ENCODE measurements at regions of chr11 and their contacts with region 1.

Region 1: GRCh38 chr11:124070915-124071635 is 29.9 kb upstream of the OR10G7 start:
- DNase-seq: peak; percentile 44 to 60 (median 51)
- H3K4me3 ChIP-seq: no peak overlapping the region
- H3K4me3 Mint-ChIP-seq: no peak overlapping the region
- H3K27ac ChIP-seq: no peak overlapping the region
- H3K27ac Mint-ChIP-seq: no peak overlapping the region
- H3K4me1 ChIP-seq: peaks cover 3% of the 10 kb centered on the region
- H3K4me1 Mint-ChIP-seq: peaks cover 0 to 5% (median 1%) of the 10 kb centered on the region in 4 donors
- H3K27me3 ChIP-seq: peaks cover 8% of the 10 kb centered on the region
- H3K27me3 Mint-ChIP-seq: peaks cover 16 to 32% of the 10 kb centered on the region in 2 donors

Region 2: DNA sequence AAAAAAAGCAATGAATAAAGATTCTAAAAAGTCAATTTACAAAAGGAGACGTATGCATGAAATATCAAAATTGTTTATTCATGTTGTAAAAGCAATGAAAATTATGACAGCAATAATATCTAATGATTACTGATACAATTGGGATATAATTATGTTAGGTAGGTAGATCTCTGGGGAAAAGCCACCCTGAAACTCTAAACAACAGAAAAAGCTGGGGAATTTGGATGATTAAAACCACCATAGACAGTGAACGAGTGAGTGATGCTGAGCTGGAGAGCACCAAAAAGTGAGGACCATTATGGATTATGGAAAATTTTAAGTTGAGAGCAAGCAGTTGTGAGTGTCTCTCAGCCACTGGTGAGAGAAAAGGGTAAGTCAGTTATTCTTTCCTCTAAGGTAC is 44.6 kb before region 1 on chr11 and contains the start of gene OR10G8:
- CTCF ChIA-PET with region 1: no interaction called
- POLR2A ChIA-PET with region 1: no interaction called
- intact Hi-C with region 1: no loop called
- DNase-seq: no peak
- H3K4me3 ChIP-seq: no peak within 1 kb of the TSS
- H3K4me3 Mint-ChIP-seq: no peak within 1 kb of the TSS
- H3K27ac ChIP-seq: no peak within 1 kb of the TSS
- H3K27ac Mint-ChIP-seq: no peak within 1 kb of the TSS
- H3K4me1 ChIP-seq: no peaks in the 10 kb centered on the region
- H3K4me1 Mint-ChIP-seq: no peaks in the 10 kb centered on the region
- H3K27me3 ChIP-seq: no peaks in the 10 kb centered on the region
- H3K27me3 Mint-ChIP-seq: peaks cover 0 to 2% of the 10 kb centered on the region in 2 donors
- total RNA-seq, gene OR10G8: not detected

Region 3: DNA sequence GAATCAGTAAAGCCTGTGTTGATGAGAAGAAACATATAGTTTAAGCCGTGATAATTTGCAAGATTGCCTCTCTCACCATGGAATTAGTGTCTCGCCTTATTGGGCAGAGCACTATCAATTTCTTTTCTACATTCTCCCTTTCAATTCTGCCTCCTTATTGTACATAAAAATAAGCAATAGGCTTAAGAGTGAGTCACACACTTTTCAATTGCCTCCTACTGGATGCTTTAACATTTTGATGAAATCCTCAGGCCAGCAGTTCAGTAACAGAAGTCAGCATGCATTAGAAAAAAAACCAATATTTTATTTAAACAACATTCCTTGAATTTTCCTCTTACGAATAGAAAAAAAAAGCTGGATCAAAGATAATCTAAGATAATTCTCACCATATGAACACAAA is 10.4 kb after region 1 on chr11:
- CTCF ChIA-PET with region 1: interaction called, 10 read pairs
- POLR2A ChIA-PET with region 1: no interaction called
- intact Hi-C with region 1: no loop called
- DNase-seq: no peak
- H3K4me3 ChIP-seq: no peak overlapping the region
- H3K4me3 Mint-ChIP-seq: no peak overlapping the region
- H3K27ac ChIP-seq: no peak overlapping the region
- H3K27ac Mint-ChIP-seq: no peak overlapping the region
- H3K4me1 ChIP-seq: no peaks in the 10 kb centered on the region
- H3K4me1 Mint-ChIP-seq: peaks cover 0 to 9% (median 2%) of the 10 kb centered on the region in 4 donors
- H3K27me3 ChIP-seq: peaks cover 2% of the 10 kb centered on the region
- H3K27me3 Mint-ChIP-seq: peaks cover 26 to 27% of the 10 kb centered on the region in 2 donors

Region 4: DNA sequence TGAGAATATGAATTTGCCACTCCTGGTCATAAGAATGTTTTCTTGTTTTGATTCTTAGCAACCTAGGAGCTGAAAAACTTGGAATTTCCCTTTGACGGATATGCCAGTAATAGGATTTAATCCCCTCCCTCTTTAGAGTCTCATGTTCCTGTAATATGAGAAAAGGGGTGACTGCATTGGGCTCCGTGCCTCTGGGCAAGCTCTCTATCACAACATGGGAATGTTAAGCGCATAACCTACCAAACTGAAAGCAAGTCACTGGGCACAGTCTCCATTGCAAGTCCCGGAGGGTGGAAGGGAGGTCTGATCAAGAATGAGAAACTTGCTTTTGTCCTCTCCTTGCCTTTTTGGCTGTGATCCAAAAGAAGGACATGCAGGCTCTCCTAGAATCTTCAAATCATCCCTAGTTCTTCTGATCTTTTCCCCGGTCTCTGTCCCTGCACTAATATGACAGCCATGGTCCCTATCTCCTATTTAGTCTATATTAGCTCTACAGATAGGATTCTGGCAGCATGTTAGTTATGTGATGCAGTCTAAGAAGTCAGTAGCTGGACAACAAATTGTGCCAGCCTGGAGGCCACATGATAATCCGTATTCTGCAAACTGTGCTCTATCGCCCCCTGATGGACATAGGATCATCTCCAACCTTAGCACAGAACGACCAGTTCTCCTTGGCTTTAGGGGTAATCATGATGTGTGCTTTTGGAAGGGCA is 123.8 kb after region 1 on chr11:
- CTCF ChIA-PET with region 1: interaction called, 32 read pairs
- POLR2A ChIA-PET with region 1: no interaction called
- intact Hi-C with region 1: no loop called
- DNase-seq: peak in 4 of 5 donors; percentile 13 to 28 (median 24)
- H3K4me3 ChIP-seq: no peak overlapping the region
- H3K4me3 Mint-ChIP-seq: no peak overlapping the region
- H3K27ac ChIP-seq: no peak overlapping the region
- H3K27ac Mint-ChIP-seq: no peak overlapping the region
- H3K4me1 ChIP-seq: no peaks in the 10 kb centered on the region
- H3K4me1 Mint-ChIP-seq: peaks cover 0 to 1% (median 0%) of the 10 kb centered on the region in 4 donors
- H3K27me3 ChIP-seq: no peaks in the 10 kb centered on the region
- H3K27me3 Mint-ChIP-seq: peaks cover 4 to 7% of the 10 kb centered on the region in 2 donors

Measured in CD4-positive, alpha-beta memory T cell (primary cell).